PC-3 (cell line): ENCODE measurements at regions of chr3 and their contacts with region 1.

Region 1: DNA sequence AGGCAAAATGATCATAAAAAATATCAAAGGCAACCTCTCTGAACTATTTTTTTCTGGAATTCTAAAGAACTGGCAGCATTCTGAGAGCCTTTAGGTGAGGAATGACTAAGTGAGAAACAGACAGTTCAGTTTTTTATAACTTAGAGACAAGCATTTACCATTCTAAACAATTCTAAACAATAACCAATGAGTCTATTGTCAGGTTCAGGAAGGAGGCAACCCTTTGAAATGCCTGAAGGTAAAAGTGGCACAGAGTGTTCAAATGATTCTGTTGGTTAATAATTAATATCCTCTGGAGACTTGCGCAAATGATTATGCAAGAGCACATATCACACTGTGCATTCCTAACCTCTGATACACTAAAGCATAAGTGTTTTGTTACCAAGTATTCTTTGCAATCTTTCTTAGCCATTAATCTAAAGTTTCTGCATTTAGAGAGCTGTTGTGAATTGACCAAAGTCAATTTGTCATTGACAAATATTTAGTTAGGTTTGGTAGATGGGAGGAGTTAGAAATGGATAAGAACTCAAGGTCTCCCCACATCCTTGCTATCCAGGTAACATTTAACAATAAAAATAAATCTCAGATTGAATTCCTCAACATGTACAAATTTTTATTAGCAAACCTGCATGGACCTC is 9.2 kb upstream of the TGFBR2 start:
- DNase-seq: peak; percentile 98
- ATAC-seq: peak; percentile 85
- H3K4me3 ChIP-seq: peak overlapping the region; percentile 18; the same call in 1 of the 2 replicates
- H3K27ac ChIP-seq: peak overlapping the region; percentile 88
- H3K4me1 ChIP-seq: peaks cover 35% of the 10 kb centered on the region
- H3K27me3 ChIP-seq: no peaks in the 10 kb centered on the region
- CTCF ChIP-seq: no peak

Region 2: GRCh38 chr3:30324587-30324986 is 272.7 kb before region 1 on chr3:
- CTCF ChIA-PET with region 1: no interaction called
- POLR2A ChIA-PET with region 1: no interaction called
- intact Hi-C with region 1: loop called (anchors 1 kb)
- DNase-seq: peak; percentile 90
- ATAC-seq: peak; percentile 98
- H3K4me3 ChIP-seq: 0 out of 2 replicates have a peak overlapping the region, but pooled peaks have one; percentile 5
- H3K27ac ChIP-seq: peak overlapping the region; percentile 91
- H3K4me1 ChIP-seq: peaks cover 17% of the 10 kb centered on the region
- H3K27me3 ChIP-seq: no peaks in the 10 kb centered on the region
- CTCF ChIP-seq: no peak

Region 3: GRCh38 chr3:30370681-30371271 is 226.5 kb before region 1 on chr3:
- CTCF ChIA-PET with region 1: no interaction called
- POLR2A ChIA-PET with region 1: no interaction called
- intact Hi-C with region 1: loop called (anchors 2 kb)
- DNase-seq: peak; percentile 83
- ATAC-seq: peak; percentile 94
- H3K4me3 ChIP-seq: no peak overlapping the region
- H3K27ac ChIP-seq: peak overlapping the region; percentile 39
- H3K4me1 ChIP-seq: peaks cover 30% of the 10 kb centered on the region
- H3K27me3 ChIP-seq: no peaks in the 10 kb centered on the region
- CTCF ChIP-seq: no peak

Region 4: GRCh38 chr3:30544812-30545211 is 52.4 kb before region 1 on chr3:
- CTCF ChIA-PET with region 1: no interaction called
- POLR2A ChIA-PET with region 1: no interaction called
- intact Hi-C with region 1: loop called (anchors 2 kb)
- DNase-seq: peak; percentile 95
- ATAC-seq: peak; percentile 96
- H3K4me3 ChIP-seq: no peak overlapping the region
- H3K27ac ChIP-seq: peak overlapping the region; percentile 88
- H3K4me1 ChIP-seq: peaks cover 25% of the 10 kb centered on the region
- H3K27me3 ChIP-seq: no peaks in the 10 kb centered on the region
- CTCF ChIP-seq: no peak

Region 5: DNA sequence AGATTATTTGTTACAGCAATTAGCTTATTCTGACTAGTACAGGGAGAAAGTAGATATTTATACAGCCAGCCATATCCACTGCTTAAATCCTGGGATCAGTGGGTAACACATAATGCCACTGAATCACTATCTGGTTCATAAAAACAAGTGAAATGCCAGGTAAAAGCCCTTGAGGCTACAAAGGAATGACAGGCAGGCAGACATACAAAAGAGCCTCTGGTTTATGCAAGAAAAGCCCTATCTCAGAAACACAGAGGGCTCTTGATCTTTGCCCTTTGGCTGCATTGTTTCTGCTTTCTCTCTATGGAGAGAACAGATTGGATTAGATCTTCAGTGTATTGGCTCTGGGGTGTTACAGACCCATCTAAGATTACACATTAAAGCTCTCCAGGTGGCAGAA is 412.6 kb after region 1 on chr3:
- CTCF ChIA-PET with region 1: no interaction called
- POLR2A ChIA-PET with region 1: interaction called, 14 read pairs
- intact Hi-C with region 1: no loop called
- DNase-seq: peak; percentile 56
- ATAC-seq: peak; percentile 3; the same call in 1 of the 2 replicates
- H3K4me3 ChIP-seq: no peak overlapping the region
- H3K27ac ChIP-seq: peak overlapping the region; percentile 81
- H3K4me1 ChIP-seq: peaks cover 51% of the 10 kb centered on the region
- H3K27me3 ChIP-seq: no peaks in the 10 kb centered on the region
- CTCF ChIP-seq: no peak